SK-N-SH (cell line): ENCODE measurements at regions of chr17 and their contacts with region 1.

Region 1: DNA sequence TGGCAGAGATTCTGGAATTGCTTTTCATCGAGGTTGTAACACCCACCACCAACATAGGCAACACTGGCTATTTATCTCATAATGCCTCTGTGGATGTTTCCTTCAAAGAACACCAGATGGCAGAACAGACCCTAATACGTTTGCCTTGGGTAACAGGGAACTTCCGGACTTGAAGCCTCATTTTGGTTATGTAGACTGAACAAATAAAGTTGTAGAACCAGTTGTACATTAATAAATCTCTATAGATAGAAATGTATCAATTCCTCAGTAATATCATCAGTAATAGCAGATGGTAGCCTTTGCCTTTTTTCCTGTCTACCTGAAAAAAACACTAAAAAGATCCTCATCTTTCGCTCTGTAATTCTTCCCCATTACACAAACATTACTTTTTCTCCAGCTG is 25.9 kb upstream of the APOH start:
- DNase-seq: peak; percentile 76
- H3K4me3 ChIP-seq: no peak overlapping the region
- H3K27ac ChIP-seq: no peak overlapping the region
- H3K4me1 ChIP-seq: peaks cover 0 to 6% of the 10 kb centered on the region in 2 experiments; a peak in 2 of 4 replicates
- H3K27me3 ChIP-seq: no peaks in the 10 kb centered on the region
- CTCF ChIP-seq: peak; percentile 96
- EP300 ChIP-seq: no peak
- RAD21 ChIP-seq: peak; percentile 99

Region 2: DNA sequence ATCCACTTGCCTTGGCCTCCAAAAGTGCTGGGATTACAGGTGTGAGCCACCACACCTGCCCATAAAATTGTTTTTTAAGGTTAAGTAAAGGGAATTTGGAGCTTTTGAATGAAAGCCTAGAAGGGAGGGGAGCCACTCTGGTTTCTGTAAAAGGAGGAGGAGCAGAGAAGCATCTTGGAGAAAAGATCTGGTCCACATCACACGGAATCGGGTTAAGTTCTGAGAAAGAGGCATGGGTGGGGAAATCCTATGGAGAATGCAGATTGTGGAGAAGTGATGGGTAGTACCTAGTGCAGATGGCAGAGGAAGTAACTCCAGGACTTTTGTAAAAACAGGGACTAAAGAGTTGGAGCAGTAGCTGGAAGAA is 44.9 kb before region 1 on chr17:
- CTCF ChIA-PET with region 1: no interaction called
- POLR2A ChIA-PET with region 1: no interaction called
- DNase-seq: no peak
- H3K4me3 ChIP-seq: no peak overlapping the region
- H3K27ac ChIP-seq: no peak overlapping the region
- H3K4me1 ChIP-seq: no peaks in the 10 kb centered on the region
- H3K27me3 ChIP-seq: no peaks in the 10 kb centered on the region
- CTCF ChIP-seq: no peak
- EP300 ChIP-seq: no peak
- RAD21 ChIP-seq: no peak

Region 3: DNA sequence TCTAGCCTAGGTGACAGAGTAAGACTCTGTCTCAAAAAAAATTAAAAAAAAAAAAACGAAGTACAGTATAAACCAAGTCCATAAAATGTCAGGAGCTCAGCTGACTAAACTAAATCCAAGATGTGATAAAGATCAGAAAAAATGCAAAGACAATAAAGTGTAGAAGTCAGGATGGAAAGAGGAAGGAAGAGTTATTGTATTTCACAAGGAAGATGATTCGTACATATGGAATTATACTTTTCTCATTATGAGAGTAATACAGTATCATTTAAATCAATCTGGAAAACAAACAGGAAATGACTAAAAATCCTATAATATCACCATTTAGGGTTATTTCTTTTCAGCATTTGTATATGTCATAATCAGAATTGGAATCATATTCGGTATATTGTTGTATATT is 14.5 kb before region 1 on chr17:
- CTCF ChIA-PET with region 1: interaction called, 13 read pairs
- POLR2A ChIA-PET with region 1: no interaction called
- DNase-seq: no peak
- H3K4me3 ChIP-seq: no peak overlapping the region
- H3K27ac ChIP-seq: peak overlapping the region in 1 of 2 experiments; percentile 68; a peak in 2 of 4 replicates
- H3K4me1 ChIP-seq: peaks cover 0 to 17% of the 10 kb centered on the region in 2 experiments; a peak in 1 of 4 replicates
- H3K27me3 ChIP-seq: no peaks in the 10 kb centered on the region
- CTCF ChIP-seq: no peak
- EP300 ChIP-seq: peak in 1 of 2 experiments; percentile 46; a peak in 1 of 4 replicates
- RAD21 ChIP-seq: no peak

Region 4: GRCh38 chr17:66567234-66568170 is 312.4 kb after region 1 on chr17:
- CTCF ChIA-PET with region 1: interaction called, 26 read pairs
- POLR2A ChIA-PET with region 1: no interaction called
- DNase-seq: peak; percentile 71
- H3K4me3 ChIP-seq: peak overlapping the region in 1 of 2 experiments; percentile 3; a peak in 1 of 4 replicates
- H3K27ac ChIP-seq: peak overlapping the region; percentile 77 to 97
- H3K4me1 ChIP-seq: peaks cover 22 to 31% of the 10 kb centered on the region in 2 experiments
- H3K27me3 ChIP-seq: no peaks in the 10 kb centered on the region
- CTCF ChIP-seq: peak; percentile 100
- EP300 ChIP-seq: peak; percentile 80 to 99
- RAD21 ChIP-seq: peak; percentile 91

Region 5: GRCh38 chr17:66625311-66625775 is 370.2 kb after region 1 on chr17:
- CTCF ChIA-PET with region 1: interaction called, 67 read pairs
- POLR2A ChIA-PET with region 1: no interaction called
- DNase-seq: peak; percentile 63
- H3K4me3 ChIP-seq: no peak overlapping the region
- H3K27ac ChIP-seq: peak overlapping the region in 1 of 2 experiments; percentile 1; a peak in 2 of 4 replicates
- H3K4me1 ChIP-seq: peaks cover under 1 to 31% of the 10 kb centered on the region in 2 experiments; a peak in 3 of 4 replicates
- H3K27me3 ChIP-seq: no peaks in the 10 kb centered on the region
- CTCF ChIP-seq: peak; percentile 78
- EP300 ChIP-seq: peak in 1 of 2 experiments; percentile 55; a peak in 1 of 4 replicates
- RAD21 ChIP-seq: peak; percentile 95